Left colon (tissue), 2 donors: ENCODE measurements at regions of chr1 and their contacts with region 1.

Region 1: DNA sequence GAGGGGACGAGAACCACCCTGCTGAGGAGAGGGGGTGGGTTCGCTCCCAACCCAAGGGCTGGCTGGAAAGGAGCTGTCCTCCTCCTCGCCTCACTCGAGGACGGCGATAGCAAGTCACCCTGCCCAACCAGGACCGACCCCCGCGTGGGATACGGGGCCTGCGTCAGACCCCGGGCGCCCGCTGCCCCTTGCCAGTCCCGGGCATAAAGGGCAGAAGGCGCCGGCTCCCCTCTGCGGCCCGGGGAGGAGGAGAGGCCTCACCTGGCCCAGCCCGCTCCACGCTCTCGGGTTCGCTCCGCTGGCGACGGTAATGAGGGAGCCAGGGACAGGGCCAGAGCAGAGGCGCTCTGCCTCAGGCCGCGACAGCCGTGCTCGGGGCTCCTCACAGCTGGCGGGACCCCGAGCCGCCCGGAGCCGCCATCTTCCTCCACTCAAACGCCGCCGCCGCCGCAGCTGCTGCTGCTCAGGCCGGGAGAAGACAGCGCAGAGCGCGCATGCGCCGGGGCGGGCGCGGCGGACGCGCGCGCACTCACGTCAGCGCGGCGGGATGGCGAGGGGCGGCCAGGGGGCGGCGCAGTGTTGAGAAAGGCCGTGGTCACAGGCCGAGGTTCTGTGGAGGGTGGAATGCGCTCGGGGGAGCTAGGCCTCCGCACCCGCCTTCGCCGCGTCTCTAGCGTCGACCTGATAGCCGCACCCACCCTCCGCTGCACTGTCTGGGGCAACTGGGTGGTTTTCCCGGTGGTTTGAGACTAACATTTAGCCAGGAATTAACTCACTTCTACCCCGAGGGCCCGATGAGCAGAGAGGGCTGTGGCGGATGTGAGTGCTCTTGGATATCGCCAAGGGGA is at the start of gene FBXO42:
- DNase-seq: peak; percentile 86 to 92
- ATAC-seq: peak; percentile 95
- total RNA-seq, gene FBXO42: 13.4 to 14.8 TPM

Region 2: DNA sequence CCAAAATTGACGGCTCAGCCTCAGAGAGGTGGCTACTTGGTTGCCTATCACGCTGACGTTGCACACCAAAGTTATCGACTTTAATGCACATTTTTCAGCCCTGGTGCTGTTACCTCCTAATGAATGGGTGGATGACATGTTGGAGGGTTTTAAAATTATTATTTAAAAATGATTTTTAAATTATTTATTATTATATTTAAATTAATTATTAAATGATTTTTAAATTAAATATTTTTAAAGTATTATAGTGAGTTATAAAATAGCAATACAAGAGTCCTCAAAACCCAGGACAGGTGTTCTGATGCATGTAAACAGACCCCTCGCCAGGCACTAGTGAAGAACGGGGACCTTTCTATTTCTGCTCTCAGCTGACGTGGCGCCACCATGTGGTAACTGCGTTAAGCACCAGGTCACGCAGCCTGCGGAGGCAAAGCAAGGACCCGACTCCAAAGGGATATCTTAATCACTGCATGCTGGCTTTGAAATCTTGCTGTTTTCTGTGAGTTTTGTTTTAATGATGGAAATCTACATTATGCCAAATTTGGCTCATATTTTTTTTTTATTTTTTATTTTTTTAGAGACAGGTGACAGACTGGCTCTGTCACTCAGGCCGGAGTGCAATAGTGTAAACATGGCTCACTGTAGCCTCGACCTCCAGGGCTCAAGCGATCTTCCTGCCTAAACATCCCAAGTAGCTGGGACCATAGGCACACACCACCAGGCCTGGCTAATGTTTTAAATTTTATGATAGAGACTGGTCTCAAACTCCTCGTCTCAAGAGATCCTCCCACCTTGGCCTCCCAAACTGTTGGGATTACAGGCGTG is 850.8 kb before region 1 on chr1:
- intact Hi-C with region 1: no loop called
- DNase-seq: peak in 1 of 2 donors; percentile 75
- ATAC-seq: peak; percentile 73

Region 3: DNA sequence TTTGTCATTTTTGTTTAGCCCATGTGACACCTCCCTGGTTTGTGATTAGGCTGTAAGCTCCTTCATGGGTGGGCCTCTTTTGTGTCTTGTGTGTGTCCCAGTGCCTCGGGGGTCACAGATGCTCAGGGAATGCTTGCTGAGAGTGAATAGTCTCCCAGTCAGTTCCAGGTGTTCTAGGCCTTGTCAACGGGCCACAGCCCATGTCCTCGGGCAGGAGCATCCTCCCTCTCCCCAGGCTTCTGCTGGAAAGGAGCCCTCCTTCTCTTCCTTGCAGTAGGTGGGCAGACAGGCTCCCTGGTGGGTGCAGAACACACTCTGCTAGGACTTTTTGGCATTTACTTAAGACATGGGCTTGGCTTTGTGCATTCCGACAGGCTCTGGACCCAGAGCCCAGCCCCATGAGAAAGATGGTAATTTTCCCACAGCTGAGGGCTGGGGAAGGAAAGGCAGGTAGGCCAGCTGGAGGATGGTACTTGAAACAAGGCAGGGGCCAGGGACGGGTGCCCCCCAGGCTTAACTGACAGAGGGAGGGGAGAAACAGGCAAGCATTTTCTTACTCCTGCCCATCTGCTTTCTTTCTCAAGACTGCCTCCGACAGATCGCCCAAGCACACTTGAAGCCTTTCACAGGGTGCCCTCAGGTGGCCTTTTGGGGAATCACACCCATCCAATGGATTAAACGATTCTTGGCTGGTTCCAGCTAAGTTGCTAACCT is 108.1 kb before region 1 on chr1:
- intact Hi-C with region 1: loop called in 1 of 2 experiments (anchors 10 kb)
- DNase-seq: peak; percentile 66 to 84
- ATAC-seq: peak; percentile 69